Activated T-helper 1 cell treated with anti-CD3 and anti-CD28 coated beads, Interleukin-12 subunit alpha, Interleukin-12 subunit beta, Interleukin-2, Interleukin-4 antibody, amounts not matched to agents 30 ng/mL and 10 ng/mL and 1 ng/mL, durations not matched to agents 14 hours and 24 hours and 36 hours (primary cell): ENCODE measurements at regions of chr11 and their contacts with region 1.

Region 1: GRCh38 chr11:9840460-9841004 is 176.7 kb downstream of the SWAP70 start:
- DNase-seq: peak; percentile 5
- H3K4me3 Mint-ChIP-seq: peak overlapping the region; percentile 2
- H3K27ac Mint-ChIP-seq: peak overlapping the region; percentile 19
- H3K4me1 Mint-ChIP-seq: peaks cover 46% of the 10 kb centered on the region
- H3K27me3 Mint-ChIP-seq: no peaks in the 10 kb centered on the region

Region 2: GRCh38 chr11:9601037-9601875 is 239.3 kb before region 1 on chr11:
- intact Hi-C with region 1: loop called (anchors 5 kb)
- DNase-seq: peak; percentile 74
- H3K4me3 Mint-ChIP-seq: peak overlapping the region; percentile 71
- H3K27ac Mint-ChIP-seq: peak overlapping the region; percentile 90
- H3K4me1 Mint-ChIP-seq: peaks cover 34% of the 10 kb centered on the region
- H3K27me3 Mint-ChIP-seq: peaks cover 4% of the 10 kb centered on the region

Region 3: GRCh38 chr11:9716275-9717039 is 124.1 kb before region 1 on chr11:
- intact Hi-C with region 1: no loop called
- DNase-seq: no peak
- H3K4me3 Mint-ChIP-seq: peak overlapping the region; percentile 5
- H3K27ac Mint-ChIP-seq: peak overlapping the region; percentile 6
- H3K4me1 Mint-ChIP-seq: peaks cover 22% of the 10 kb centered on the region
- H3K27me3 Mint-ChIP-seq: no peaks in the 10 kb centered on the region

Region 4: GRCh38 chr11:9853929-9854552 is 13.5 kb after region 1 on chr11:
- intact Hi-C with region 1: loop called (anchors 1 kb)
- DNase-seq: no peak
- H3K4me3 Mint-ChIP-seq: no peak overlapping the region
- H3K27ac Mint-ChIP-seq: no peak overlapping the region
- H3K4me1 Mint-ChIP-seq: peaks cover 11% of the 10 kb centered on the region
- H3K27me3 Mint-ChIP-seq: peaks cover 3% of the 10 kb centered on the region

Region 5: DNA sequence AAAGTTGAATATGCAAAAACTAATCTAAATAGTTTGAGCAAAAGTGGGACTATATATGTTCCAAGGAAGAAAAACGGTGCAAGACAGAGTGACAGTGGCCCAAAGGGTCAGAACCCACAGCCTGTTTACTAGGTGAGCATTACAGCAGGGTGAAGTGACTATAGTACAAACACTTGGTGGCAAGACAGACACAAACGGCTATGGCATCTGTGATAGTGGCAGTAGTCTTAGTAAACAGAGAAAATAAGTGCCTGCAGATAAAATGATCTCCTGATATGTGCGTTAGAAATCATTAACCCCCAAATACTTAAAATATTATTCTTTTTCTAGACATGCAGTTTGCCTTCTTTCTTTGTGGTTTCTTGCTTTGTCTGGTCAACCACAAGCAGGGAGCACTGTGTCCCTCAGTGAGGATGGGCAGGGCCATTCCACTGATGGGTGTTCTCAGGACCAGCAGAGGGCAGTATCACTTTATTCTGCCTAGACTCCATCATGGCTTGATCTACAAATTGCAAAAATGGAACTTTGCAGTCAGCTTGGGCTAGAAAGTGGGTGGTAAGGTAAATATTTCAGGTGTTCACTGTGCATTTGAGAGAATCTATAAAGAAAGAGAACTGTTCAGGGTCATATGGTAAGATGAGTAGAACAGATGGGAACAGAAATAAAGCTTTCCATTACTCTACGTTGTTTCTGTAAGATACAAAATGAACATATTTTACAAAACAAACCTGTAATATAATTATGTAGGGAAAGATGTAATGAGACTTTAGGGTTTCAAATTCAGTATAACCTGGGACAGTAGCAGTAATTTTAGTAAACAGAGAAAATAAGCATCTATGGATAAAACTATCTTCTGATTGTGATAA is 21.6 kb after region 1 on chr11:
- intact Hi-C with region 1: loop called (anchors 1 kb)
- DNase-seq: peak; percentile 11
- H3K4me3 Mint-ChIP-seq: no peak overlapping the region
- H3K27ac Mint-ChIP-seq: peak overlapping the region; percentile 1
- H3K4me1 Mint-ChIP-seq: peaks cover 34% of the 10 kb centered on the region
- H3K27me3 Mint-ChIP-seq: peaks cover 4% of the 10 kb centered on the region

Region 6: DNA sequence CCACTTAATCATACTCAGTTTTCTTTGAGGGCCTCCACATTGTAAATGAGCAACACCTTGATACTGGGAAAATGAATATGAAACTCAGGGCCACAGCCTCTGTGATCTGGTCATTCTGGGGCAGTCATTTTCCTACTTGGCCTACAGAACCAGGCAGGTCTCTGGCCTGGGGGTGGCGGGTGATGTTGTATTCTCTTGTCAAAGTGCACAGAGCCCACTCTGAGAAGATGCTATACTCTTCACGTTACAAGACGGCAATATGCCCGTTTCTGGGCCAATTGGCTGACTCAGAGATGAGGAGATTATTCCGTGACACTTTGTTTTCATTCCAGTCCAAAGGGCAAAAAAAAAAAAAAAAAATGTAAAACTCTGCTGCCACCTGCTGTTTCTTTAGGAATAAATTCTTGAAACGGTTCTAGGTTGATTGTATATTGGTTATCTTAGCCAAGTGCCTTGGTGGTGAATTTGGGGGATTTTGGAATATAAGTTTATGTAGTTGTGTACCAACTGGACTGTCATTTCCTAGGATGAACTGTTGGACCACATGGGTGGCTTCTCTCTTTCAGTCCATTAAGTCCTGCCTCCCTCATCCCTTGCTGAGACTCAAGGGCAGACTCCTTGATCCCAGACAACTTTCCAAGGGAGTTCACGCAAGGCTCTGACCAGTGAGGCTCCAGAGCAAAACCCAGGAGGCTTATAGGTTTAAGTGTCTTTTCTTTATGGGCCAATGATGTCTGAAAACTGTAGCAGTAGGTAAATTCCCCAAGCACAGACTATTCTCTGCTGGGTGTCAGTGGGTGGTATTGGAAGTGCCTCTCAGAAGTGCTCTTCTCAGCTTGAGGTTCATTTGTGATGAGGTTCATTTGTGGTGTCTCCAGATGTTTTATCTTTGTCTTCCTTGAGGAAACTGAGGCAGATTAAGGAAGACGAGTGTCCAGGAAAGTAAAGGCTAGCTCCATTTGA is 482.6 kb after region 1 on chr11:
- intact Hi-C with region 1: loop called (anchors 5 kb)
- DNase-seq: no peak
- H3K4me3 Mint-ChIP-seq: no peak overlapping the region
- H3K27ac Mint-ChIP-seq: peak overlapping the region; percentile 88
- H3K4me1 Mint-ChIP-seq: peaks cover 20% of the 10 kb centered on the region
- H3K27me3 Mint-ChIP-seq: peaks cover 16% of the 10 kb centered on the region

Region 7: GRCh38 chr11:10742471-10743208 is 902.1 kb after region 1 on chr11:
- intact Hi-C with region 1: loop called (anchors 10 kb)
- DNase-seq: peak; percentile 17
- H3K4me3 Mint-ChIP-seq: peak overlapping the region; percentile 27
- H3K27ac Mint-ChIP-seq: peak overlapping the region; percentile 7
- H3K4me1 Mint-ChIP-seq: peaks cover 35% of the 10 kb centered on the region
- H3K27me3 Mint-ChIP-seq: no peaks in the 10 kb centered on the region